ENCODE measurements at regions of chr15 and their contacts with region 1.

Region 1: DNA sequence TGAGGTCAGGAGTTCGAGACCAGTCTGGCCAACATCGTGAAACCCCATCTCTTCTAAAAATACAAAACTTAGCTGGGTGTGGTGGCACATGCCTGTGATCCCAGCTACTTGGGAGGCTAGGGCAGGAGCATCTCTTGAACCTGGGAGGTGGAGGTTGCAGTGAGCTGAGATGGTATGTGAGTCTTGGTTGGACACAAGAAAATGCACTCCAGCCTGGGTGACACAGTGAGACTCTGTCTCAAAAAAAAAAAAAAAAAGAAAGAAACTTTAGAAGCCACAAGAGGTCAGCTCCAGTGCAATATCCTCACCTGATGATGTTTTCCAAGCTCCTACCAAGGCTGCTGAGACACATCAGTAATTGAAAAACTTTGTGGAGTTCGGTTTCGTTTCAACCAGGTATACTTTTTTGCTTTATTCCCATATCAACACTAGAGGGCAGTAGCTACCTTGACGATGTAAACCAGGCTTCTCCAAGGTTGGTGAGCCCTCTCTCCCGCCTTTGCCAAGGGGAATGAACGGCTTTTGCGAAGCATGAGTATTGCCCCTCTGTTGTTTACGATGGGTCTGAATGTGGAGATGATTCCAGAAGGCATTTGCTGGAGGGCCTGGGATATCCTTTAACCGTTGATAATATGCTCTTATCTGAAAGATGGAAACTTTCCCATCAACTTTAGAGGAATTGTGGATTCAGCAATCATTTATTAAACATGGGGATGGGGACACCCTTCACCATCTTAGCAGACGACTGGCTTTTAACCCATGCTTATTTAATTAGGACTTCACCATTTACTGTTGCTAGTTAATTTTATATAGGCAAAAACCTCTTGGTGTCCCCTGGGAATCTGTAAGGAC is 202.8 kb downstream of the SV2B start:
- DNase-seq: peak; percentile 86
- H3K4me3 ChIP-seq: no peak overlapping the region
- H3K27ac ChIP-seq: no peak overlapping the region
- H3K4me1 ChIP-seq: no peaks in the 10 kb centered on the region
- H3K27me3 ChIP-seq: no peaks in the 10 kb centered on the region
- CTCF ChIP-seq: peak; percentile 75

Region 2: GRCh38 chr15:91348752-91349500 is 46.1 kb after region 1 on chr15:
- CTCF ChIA-PET with region 1: no interaction called
- POLR2A ChIA-PET with region 1: no interaction called
- intact Hi-C with region 1: no loop called
- DNase-seq: no peak
- H3K4me3 ChIP-seq: no peak overlapping the region
- H3K27ac ChIP-seq: no peak overlapping the region
- H3K4me1 ChIP-seq: no peaks in the 10 kb centered on the region
- H3K27me3 ChIP-seq: peaks cover 4% of the 10 kb centered on the region
- CTCF ChIP-seq: no peak

Region 3: DNA sequence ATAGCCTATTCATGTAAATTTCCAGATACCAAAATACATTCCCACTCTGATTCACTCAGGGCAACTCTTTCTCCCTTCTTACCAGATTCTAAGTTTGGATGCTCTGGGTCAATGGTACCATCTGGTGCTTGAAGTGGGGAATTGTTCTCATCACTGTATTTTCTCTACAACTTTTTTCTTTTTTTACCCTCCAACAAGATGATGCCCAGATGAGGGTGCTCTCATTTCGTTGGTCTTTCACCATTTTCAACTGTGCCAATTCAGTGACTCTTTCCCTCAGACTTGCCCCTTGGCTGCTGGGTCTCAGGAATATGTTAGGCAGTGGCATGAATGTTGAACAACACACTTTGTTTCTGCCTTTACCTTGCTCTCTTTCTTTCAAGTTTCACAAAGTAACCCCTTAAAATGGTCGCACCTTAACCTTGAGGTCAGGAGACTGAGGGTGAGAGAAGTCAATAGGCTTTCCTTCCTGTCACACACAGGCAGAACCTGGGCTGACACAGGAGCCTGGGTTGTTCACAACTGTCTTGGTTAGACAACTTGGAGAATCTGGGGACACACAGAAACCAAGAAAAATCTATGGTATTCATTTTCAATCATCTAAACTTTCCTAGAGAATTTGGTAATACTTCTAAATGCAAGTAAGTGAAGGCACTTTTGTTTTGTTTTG is 220.0 kb after region 1 on chr15:
- CTCF ChIA-PET with region 1: no interaction called
- POLR2A ChIA-PET with region 1: no interaction called
- intact Hi-C with region 1: loop called (anchors 1 kb)
- DNase-seq: peak; percentile 51
- H3K4me3 ChIP-seq: no peak overlapping the region
- H3K27ac ChIP-seq: no peak overlapping the region
- H3K4me1 ChIP-seq: peaks cover 7% of the 10 kb centered on the region
- H3K27me3 ChIP-seq: no peaks in the 10 kb centered on the region
- CTCF ChIP-seq: peak; percentile 40

Region 4: DNA sequence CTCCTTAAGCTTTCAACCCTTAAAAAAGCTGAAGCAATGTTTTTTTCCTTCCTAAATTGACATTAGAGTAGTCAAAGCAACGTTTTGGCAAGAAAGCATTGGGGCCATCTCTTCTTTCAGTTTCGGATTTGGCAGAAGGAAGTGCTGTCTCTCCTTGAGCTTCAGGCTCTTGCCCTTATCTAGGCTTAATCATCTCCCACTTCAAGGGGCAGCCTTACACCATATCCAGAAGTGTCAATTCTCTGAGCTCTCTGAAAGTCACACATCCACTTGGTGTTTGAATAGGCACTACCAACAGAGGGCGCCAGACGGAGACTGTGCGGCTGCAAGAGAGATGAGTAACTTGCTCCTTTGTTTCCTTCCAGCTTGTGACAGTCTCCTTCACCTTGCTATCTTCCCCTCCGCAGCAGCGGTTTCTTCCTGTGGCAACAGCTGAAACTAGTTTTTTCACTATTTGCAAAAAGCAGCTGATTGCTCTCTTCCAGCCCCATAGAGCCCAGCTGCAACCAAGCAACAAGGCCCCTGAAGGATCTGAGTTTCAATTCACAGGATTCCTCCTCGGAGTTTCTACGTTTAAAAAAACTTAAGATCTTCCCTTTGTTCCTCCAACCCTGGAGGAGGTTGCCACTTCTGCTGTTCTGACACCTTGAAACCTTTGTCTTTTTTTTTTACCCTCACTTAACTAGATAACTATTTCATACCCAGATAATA is 403.7 kb after region 1 on chr15:
- CTCF ChIA-PET with region 1: no interaction called
- POLR2A ChIA-PET with region 1: no interaction called
- intact Hi-C with region 1: loop called (anchors 2 kb)
- DNase-seq: peak; percentile 82
- H3K4me3 ChIP-seq: no peak overlapping the region
- H3K27ac ChIP-seq: no peak overlapping the region
- H3K4me1 ChIP-seq: no peaks in the 10 kb centered on the region
- H3K27me3 ChIP-seq: no peaks in the 10 kb centered on the region
- CTCF ChIP-seq: peak; percentile 95

Region 5: GRCh38 chr15:91852741-91853510 is 550.1 kb after region 1 on chr15:
- CTCF ChIA-PET with region 1: no interaction called
- POLR2A ChIA-PET with region 1: no interaction called
- intact Hi-C with region 1: loop called (anchors 2 kb)
- DNase-seq: peak; percentile 63
- H3K4me3 ChIP-seq: peak overlapping the region; percentile 71
- H3K27ac ChIP-seq: peak overlapping the region; percentile 76
- H3K4me1 ChIP-seq: peaks cover 39% of the 10 kb centered on the region
- H3K27me3 ChIP-seq: peaks cover 10% of the 10 kb centered on the region
- CTCF ChIP-seq: peak; percentile 13

Region 6: GRCh38 chr15:91942676-91943576 is 640.1 kb after region 1 on chr15:
- CTCF ChIA-PET with region 1: interaction called, 3 read pairs
- POLR2A ChIA-PET with region 1: no interaction called
- intact Hi-C with region 1: loop called (anchors 5 kb)
- DNase-seq: peak; percentile 78
- H3K4me3 ChIP-seq: no peak overlapping the region
- H3K27ac ChIP-seq: no peak overlapping the region
- H3K4me1 ChIP-seq: peaks cover 17% of the 10 kb centered on the region
- H3K27me3 ChIP-seq: no peaks in the 10 kb centered on the region
- CTCF ChIP-seq: no peak

Measured in A673 (cell line).